Caco-2 (cell line): ENCODE measurements at regions of chr6 and their contacts with region 1.

Region 1: DNA sequence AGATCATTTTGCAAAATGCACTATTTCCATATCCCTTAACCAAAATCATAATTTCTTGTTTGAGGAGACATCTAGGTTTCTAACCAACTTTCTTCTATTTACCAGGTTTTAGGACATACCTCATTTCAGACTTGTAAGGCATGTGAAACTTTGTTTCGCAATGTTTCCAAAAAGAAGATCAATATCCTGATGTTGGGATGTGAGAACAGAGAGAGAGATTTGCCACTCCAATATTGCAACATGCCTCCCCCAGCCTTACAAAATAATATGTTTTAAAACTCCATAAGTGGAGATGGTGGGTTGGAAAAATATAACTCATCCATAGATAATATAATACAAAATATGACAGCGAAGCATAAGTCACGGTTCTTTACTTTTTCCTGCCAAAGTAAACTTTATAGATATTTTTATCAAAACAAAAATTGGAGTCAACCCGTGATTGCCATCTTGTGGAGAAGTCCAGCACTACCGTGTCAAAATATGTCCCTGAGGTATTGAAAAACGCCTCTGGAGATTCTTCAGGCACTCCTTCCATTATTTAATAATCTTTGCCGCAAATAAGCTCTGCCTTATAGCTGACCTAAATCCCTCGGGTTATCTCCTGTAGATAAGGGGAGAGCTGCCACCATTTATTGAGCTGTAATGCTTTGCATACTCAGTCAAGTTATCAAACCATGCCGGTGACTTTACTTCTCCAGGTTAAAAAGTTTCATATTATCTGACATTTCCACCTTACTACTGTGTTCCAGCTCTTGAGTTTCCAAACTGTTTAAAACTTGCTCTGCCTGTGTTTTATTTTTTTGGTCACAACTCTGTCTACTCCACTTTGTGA is 534.2 kb downstream of the HACE1 start:
- DNase-seq: peak in 1 of 2 experiments; percentile 56
- H3K4me3 ChIP-seq: no peak overlapping the region
- H3K4me3 Mint-ChIP-seq: no peak overlapping the region
- H3K27ac Mint-ChIP-seq: peak overlapping the region; percentile 35
- H3K4me1 ChIP-seq: peaks cover 4% of the 10 kb centered on the region; the same call in 1 of the 2 replicates
- H3K4me1 Mint-ChIP-seq: peaks cover 14% of the 10 kb centered on the region
- H3K27me3 ChIP-seq: no peaks in the 10 kb centered on the region
- H3K27me3 Mint-ChIP-seq: no peaks in the 10 kb centered on the region
- CTCF ChIP-seq: peak; percentile 70 to 73

Region 2: GRCh38 chr6:103910018-103910417 is 415.5 kb before region 1 on chr6:
- CTCF ChIA-PET with region 1: no interaction called
- POLR2A ChIA-PET with region 1: no interaction called
- intact Hi-C with region 1: loop called (anchors 10 kb)
- DNase-seq: no peak
- H3K4me3 ChIP-seq: no peak overlapping the region
- H3K4me3 Mint-ChIP-seq: no peak overlapping the region
- H3K27ac Mint-ChIP-seq: no peak overlapping the region
- H3K4me1 ChIP-seq: no peaks in the 10 kb centered on the region
- H3K4me1 Mint-ChIP-seq: no peaks in the 10 kb centered on the region
- H3K27me3 ChIP-seq: no peaks in the 10 kb centered on the region
- H3K27me3 Mint-ChIP-seq: no peaks in the 10 kb centered on the region
- CTCF ChIP-seq: no peak

Region 3: GRCh38 chr6:104003803-104004516 is 321.6 kb before region 1 on chr6:
- CTCF ChIA-PET with region 1: no interaction called
- POLR2A ChIA-PET with region 1: no interaction called
- intact Hi-C with region 1: loop called (anchors 1 kb)
- DNase-seq: no peak
- H3K4me3 ChIP-seq: no peak overlapping the region
- H3K4me3 Mint-ChIP-seq: no peak overlapping the region
- H3K27ac Mint-ChIP-seq: no peak overlapping the region
- H3K4me1 ChIP-seq: no peaks in the 10 kb centered on the region
- H3K4me1 Mint-ChIP-seq: no peaks in the 10 kb centered on the region
- H3K27me3 ChIP-seq: no peaks in the 10 kb centered on the region
- H3K27me3 Mint-ChIP-seq: no peaks in the 10 kb centered on the region
- CTCF ChIP-seq: peak in 1 of 2 experiments; percentile 21

Region 4: DNA sequence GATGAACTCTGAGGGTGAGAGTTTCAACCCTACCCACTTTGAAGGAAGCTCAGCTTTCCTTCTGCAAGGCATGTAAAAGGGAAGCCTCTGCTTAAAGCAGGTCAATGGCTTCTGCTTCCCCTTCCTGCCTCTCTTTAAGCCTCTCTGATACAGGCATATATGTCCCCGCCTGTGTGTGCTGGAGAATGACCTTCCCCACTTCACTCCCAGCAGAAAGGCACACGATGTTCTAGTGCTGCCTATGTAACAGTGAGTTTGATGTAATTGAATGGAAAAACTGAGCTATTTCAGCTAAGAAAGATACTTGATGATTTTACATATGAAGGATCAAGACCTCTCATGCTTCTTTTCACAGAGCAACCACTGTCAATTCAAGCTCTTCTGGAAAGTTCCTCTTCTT is 98.0 kb before region 1 on chr6:
- CTCF ChIA-PET with region 1: interaction called, 7 read pairs
- POLR2A ChIA-PET with region 1: no interaction called
- intact Hi-C with region 1: loop called (anchors 1 kb)
- DNase-seq: no peak
- H3K4me3 ChIP-seq: no peak overlapping the region
- H3K4me3 Mint-ChIP-seq: no peak overlapping the region
- H3K27ac Mint-ChIP-seq: no peak overlapping the region
- H3K4me1 ChIP-seq: peaks cover 27% of the 10 kb centered on the region
- H3K4me1 Mint-ChIP-seq: peaks cover 14% of the 10 kb centered on the region
- H3K27me3 ChIP-seq: no peaks in the 10 kb centered on the region
- H3K27me3 Mint-ChIP-seq: no peaks in the 10 kb centered on the region
- CTCF ChIP-seq: no peak

Region 5: GRCh38 chr6:104239971-104240370 is 85.6 kb before region 1 on chr6:
- CTCF ChIA-PET with region 1: interaction called, 3 read pairs
- POLR2A ChIA-PET with region 1: no interaction called
- intact Hi-C with region 1: loop called (anchors 1 kb)
- DNase-seq: peak; percentile 69 to 72
- H3K4me3 ChIP-seq: no peak overlapping the region
- H3K4me3 Mint-ChIP-seq: no peak overlapping the region
- H3K27ac Mint-ChIP-seq: peak overlapping the region; percentile 72
- H3K4me1 ChIP-seq: peaks cover 35% of the 10 kb centered on the region
- H3K4me1 Mint-ChIP-seq: peaks cover 18% of the 10 kb centered on the region
- H3K27me3 ChIP-seq: no peaks in the 10 kb centered on the region
- H3K27me3 Mint-ChIP-seq: no peaks in the 10 kb centered on the region
- CTCF ChIP-seq: no peak

Region 6: GRCh38 chr6:104281370-104281769 is 44.2 kb before region 1 on chr6:
- CTCF ChIA-PET with region 1: no interaction called
- POLR2A ChIA-PET with region 1: no interaction called
- intact Hi-C with region 1: loop called (anchors 5 kb)
- DNase-seq: peak in 1 of 2 experiments; percentile 7
- H3K4me3 ChIP-seq: no peak overlapping the region
- H3K4me3 Mint-ChIP-seq: no peak overlapping the region
- H3K27ac Mint-ChIP-seq: no peak overlapping the region
- H3K4me1 ChIP-seq: peaks cover 5% of the 10 kb centered on the region; the same call in 1 of the 2 replicates
- H3K4me1 Mint-ChIP-seq: no peaks in the 10 kb centered on the region
- H3K27me3 ChIP-seq: no peaks in the 10 kb centered on the region
- H3K27me3 Mint-ChIP-seq: no peaks in the 10 kb centered on the region
- CTCF ChIP-seq: no peak

Region 7: GRCh38 chr6:104483225-104483834 is 157.8 kb after region 1 on chr6:
- CTCF ChIA-PET with region 1: no interaction called
- POLR2A ChIA-PET with region 1: no interaction called
- intact Hi-C with region 1: loop called (anchors 5 kb)
- DNase-seq: no peak
- H3K4me3 ChIP-seq: no peak overlapping the region
- H3K4me3 Mint-ChIP-seq: no peak overlapping the region
- H3K27ac Mint-ChIP-seq: no peak overlapping the region
- H3K4me1 ChIP-seq: no peaks in the 10 kb centered on the region
- H3K4me1 Mint-ChIP-seq: no peaks in the 10 kb centered on the region
- H3K27me3 ChIP-seq: no peaks in the 10 kb centered on the region; the same call in 1 of the 2 replicates
- H3K27me3 Mint-ChIP-seq: no peaks in the 10 kb centered on the region
- CTCF ChIP-seq: peak; percentile 22 to 40